Body of pancreas (tissue), 4 donors: ENCODE measurements at regions of chrX and their contacts with region 1.

Region 1: DNA sequence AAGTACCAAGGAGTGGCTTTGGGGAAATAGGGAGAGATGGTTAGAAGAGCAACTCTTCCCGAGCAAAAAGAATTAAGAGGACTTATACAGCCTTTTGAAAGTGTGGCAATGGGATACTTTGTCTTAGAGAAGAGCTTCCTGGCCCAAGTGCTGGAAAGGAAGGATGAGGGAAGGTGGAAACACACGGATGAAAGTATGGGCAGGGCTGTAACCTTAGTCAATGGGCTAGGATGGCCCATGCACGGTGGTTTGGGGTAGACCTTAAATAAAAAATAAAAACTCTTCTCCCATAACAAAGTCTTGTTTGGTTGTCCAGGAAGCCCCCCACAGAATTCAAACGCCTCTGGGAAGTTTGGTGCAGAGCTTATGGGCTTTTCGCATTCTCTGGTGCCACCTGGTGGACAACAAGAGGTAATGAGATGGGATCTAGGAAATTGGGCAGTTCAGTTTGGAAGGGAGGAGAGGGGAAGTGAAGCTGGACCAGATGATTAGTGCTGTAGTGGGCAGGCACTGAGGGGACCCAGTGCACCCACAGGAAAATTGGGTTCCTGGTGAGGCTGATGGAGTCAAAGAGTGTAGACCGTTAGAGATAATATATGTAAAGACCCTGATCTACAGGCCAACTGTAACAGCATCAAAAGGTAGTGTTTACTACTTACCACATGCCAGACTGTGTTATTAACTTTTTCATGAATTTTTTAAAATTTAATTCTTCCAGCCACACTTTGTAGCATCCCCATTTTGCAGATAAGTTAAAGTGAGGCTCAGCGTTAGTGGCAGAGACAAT is 13.8 kb upstream of the ENOX2 start:
- DNase-seq: peak; percentile 29 to 49 (median 41)
- ATAC-seq: peak; percentile 53
- H3K4me3 ChIP-seq: no peak overlapping the region
- H3K27ac ChIP-seq: no peak overlapping the region
- H3K4me1 ChIP-seq: no peaks in the 10 kb centered on the region
- H3K27me3 ChIP-seq: no peaks in the 10 kb centered on the region
- CTCF ChIP-seq: peak; percentile 39 to 78 (median 66)
- POLR2A ChIP-seq: no peak

Region 2: DNA sequence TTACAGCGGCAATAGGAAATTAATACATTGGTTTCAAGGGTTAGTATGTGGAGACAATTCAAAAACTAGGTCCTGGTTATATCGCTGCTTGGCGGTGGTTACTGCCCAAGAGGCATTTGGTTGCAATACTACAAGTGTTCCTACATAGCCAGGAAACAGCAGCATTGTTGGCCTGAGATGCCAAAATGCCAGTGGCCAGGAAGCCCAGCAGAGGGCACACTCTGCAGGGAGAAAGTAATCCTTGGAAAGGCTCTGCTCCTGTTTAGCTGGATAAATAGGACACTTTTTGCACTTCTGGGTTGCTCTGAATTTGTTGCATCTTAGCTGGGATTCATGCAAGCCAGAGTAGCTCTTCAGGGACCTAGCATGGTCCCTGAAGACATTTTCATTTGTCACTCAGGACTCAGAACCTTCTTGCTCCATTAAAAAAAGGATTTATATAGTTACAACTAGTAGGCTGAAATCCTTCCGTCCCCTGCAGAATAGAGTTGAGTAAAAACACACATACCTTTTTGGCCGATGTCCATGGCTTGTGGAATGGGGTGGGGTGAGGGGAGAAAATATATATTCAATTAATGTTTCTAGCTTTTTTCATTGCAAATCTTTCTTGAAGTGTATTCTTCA is 523.3 kb before region 1 on chrX:
- intact Hi-C with region 1: loop called (anchors 5 kb)
- DNase-seq: peak; percentile 42 to 69 (median 54)
- ATAC-seq: peak; percentile 64
- H3K4me3 ChIP-seq: no peak overlapping the region
- H3K27ac ChIP-seq: no peak overlapping the region
- H3K4me1 ChIP-seq: no peaks in the 10 kb centered on the region
- H3K27me3 ChIP-seq: no peaks in the 10 kb centered on the region
- CTCF ChIP-seq: peak; percentile 18 to 73 (median 52)
- POLR2A ChIP-seq: no peak

Region 3: DNA sequence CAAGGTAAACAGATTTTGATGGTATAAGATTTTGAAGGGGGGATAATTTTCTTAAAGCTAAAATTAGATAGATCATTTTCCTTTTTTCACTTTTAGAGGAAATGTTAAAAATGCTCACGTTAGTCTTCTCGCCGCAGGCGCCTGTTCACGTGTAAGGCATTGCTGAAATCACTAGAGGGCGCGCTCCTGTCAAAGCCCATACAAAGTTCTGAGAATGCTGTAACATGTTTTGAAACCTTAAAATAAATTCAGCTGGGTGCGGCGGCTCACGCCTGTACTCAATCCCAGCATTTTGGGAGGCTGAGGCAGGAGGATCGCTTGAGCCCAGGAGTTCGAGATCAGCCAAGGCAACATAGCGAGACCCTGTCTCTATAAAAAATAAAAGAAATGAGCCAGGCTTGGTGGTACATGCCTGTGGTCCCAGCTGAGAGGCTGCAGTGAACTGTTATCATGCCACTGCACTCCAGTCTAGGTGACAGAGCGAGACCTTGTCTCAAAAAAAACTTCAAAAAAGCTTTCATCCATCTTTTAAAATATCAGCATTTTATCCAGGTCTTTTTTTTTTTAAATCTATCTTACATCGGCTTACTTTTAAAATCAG is 377.0 kb before region 1 on chrX:
- intact Hi-C with region 1: loop called (anchors 5 kb)
- DNase-seq: peak; percentile 44 to 64 (median 50)
- ATAC-seq: no peak
- H3K4me3 ChIP-seq: no peak overlapping the region
- H3K27ac ChIP-seq: no peak overlapping the region
- H3K4me1 ChIP-seq: no peaks in the 10 kb centered on the region
- H3K27me3 ChIP-seq: no peaks in the 10 kb centered on the region
- CTCF ChIP-seq: peak; percentile 47 to 69 (median 54)
- POLR2A ChIP-seq: no peak

Region 4: DNA sequence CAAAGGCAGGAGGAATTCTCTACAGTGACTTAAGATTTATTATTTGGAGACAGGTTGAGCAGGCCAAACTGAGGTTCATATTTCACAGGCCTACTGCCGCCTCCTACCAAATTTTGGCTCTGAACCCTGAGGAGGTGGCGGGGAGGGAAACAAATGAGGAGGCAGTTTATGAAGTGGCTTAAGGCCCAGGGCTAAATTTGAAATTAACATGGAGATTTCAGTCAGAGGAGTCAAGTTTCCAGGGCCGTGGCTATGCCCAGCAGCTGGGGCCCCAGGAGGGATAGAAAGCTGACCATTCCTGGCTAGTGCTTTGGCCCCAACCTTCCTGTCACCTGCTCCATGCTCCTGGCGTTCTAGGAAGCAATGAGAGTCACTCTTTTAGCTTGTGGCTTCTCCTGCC is 68.0 kb after region 1 on chrX:
- intact Hi-C with region 1: no loop called
- DNase-seq: no peak
- ATAC-seq: no peak
- H3K4me3 ChIP-seq: no peak overlapping the region
- H3K27ac ChIP-seq: no peak overlapping the region
- H3K4me1 ChIP-seq: no peaks in the 10 kb centered on the region
- H3K27me3 ChIP-seq: no peaks in the 10 kb centered on the region
- CTCF ChIP-seq: no peak
- POLR2A ChIP-seq: no peak

Region 5: DNA sequence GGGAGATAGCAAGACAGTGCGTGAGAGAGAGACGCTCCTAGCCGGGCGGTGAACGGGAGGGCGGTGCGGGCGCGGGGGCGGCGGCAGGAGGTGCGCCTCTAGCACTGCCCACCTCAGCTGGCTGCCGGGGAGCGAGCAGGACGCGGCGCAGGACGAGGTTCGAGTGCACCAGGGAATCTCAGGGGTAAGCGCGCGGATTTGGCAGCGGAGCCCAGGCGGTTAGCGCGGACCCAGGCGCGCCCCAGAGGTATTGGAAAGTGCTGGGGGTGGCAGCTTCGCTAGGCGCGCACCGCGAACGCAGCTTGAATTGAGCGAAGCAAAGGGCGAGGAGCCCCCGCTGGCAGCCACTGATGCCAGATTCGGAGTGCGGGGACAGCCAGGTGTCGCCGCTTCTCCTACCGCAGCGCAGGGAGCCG is 165.5 kb after region 1 on chrX:
- intact Hi-C with region 1: no loop called
- DNase-seq: no peak
- ATAC-seq: no peak
- H3K4me3 ChIP-seq: no peak overlapping the region
- H3K27ac ChIP-seq: no peak overlapping the region
- H3K4me1 ChIP-seq: no peaks in the 10 kb centered on the region
- H3K27me3 ChIP-seq: no peaks in the 10 kb centered on the region
- CTCF ChIP-seq: no peak
- POLR2A ChIP-seq: no peak